ENCODE measurements at regions of chr7 and their contacts with region 1.

Region 1: DNA sequence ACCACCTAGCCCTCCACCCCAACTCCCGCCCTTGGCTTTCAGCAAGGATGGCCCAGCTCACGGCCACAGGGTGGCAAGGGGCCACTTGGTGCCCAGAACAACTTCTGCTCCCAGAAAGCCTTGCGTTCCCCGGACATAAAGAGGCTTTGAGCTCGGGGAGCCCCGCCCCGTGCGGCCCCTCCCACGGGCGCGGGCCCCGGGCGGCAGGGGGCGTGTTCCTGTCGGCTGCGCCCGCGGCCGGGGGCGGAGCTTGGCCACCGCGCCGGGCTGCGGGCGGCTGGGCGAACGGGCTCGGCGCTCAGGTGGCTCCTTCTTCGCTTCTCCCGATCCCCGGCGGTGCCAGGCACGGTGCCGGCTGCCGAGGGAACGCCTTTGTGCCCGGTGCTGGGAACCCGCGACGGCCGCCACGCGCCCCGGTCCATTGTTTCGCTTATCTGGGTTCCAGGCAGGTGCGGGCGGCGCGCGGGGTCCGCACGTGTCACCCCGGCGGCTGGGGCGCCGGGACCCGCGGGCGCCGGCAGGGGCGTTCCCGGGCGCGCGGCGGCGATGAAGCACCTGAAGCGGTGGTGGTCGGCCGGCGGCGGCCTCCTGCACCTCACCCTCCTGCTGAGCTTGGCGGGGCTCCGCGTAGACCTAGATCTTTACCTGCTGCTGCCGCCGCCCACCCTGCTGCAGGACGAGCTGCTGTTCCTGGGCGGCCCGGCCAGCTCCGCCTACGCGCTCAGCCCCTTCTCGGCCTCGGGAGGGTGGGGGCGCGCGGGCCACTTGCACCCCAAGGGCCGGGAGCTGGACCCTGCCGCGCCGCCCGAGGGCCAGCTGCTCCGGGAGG is at the start of gene NFE2L3:
- DNase-seq: peak; percentile 87
- ATAC-seq: peak; percentile 76
- H3K4me3 Mint-ChIP-seq: peak within 1 kb of the TSS; percentile 92
- H3K27ac Mint-ChIP-seq: peak within 1 kb of the TSS; percentile 98
- H3K4me1 Mint-ChIP-seq: peaks cover 64% of the 10 kb centered on the region
- H3K27me3 Mint-ChIP-seq: no peaks in the 10 kb centered on the region
- total RNA-seq, gene NFE2L3: 9.7 to 10.4 TPM

Region 2: DNA sequence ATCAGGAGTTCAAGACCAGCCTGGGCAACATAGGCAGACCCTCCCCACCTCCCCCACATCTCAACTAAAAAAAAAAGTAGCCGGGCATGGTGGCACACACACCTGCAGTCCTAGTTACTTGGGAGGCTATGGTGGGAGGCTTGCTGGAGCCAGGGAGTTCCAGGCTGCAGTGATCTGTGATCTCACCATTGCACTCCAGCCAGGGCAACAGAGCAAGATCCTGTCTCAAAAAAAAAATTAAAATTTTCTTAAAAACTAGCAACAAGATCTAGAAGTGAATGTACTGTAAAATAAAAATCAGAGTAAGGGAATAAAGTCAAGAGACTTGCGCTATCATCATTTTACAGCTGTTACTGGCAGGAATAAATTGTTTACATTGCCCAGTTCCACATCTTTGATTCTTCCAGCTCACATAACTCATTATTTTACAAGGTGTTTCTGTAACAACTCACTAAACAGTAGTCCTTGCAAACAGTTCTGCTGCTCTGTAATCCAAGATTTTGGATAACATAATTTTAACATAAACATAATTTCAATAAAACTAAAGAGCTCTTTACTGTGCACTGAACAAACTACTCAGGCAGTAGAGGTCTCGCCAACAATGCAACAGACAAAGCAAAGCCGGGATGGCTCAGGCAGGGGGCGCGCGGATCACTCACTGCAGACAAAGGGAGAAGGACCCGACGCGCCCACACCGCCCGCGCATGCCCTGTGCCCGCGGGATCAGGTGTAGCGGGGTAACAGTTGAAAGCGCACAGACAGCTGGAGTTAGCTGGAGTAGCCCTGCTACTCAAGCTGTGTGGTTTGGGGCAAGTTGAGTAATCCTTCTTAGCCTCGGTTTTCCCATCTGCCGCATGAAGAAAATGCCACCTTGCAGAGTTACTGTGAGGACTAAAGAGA is 73.5 kb before region 1 on chr7:
- CTCF ChIA-PET with region 1: interaction called, 12 read pairs
- POLR2A ChIA-PET with region 1: interaction called, 5 read pairs
- DNase-seq: peak; percentile 85
- ATAC-seq: peak; percentile 100
- H3K4me3 Mint-ChIP-seq: peak overlapping the region; percentile 19
- H3K27ac Mint-ChIP-seq: no peak overlapping the region
- H3K4me1 Mint-ChIP-seq: peaks cover 11% of the 10 kb centered on the region
- H3K27me3 Mint-ChIP-seq: peaks cover 44% of the 10 kb centered on the region

Region 3: GRCh38 chr7:26167301-26167934 is 15.3 kb after region 1 on chr7:
- CTCF ChIA-PET with region 1: interaction called, 12 read pairs
- POLR2A ChIA-PET with region 1: interaction called, 12 read pairs
- DNase-seq: peak; percentile 43
- ATAC-seq: peak; percentile 82
- H3K4me3 Mint-ChIP-seq: no peak overlapping the region
- H3K27ac Mint-ChIP-seq: peak overlapping the region; percentile 71
- H3K4me1 Mint-ChIP-seq: peaks cover 42% of the 10 kb centered on the region
- H3K27me3 Mint-ChIP-seq: no peaks in the 10 kb centered on the region

Region 4: DNA sequence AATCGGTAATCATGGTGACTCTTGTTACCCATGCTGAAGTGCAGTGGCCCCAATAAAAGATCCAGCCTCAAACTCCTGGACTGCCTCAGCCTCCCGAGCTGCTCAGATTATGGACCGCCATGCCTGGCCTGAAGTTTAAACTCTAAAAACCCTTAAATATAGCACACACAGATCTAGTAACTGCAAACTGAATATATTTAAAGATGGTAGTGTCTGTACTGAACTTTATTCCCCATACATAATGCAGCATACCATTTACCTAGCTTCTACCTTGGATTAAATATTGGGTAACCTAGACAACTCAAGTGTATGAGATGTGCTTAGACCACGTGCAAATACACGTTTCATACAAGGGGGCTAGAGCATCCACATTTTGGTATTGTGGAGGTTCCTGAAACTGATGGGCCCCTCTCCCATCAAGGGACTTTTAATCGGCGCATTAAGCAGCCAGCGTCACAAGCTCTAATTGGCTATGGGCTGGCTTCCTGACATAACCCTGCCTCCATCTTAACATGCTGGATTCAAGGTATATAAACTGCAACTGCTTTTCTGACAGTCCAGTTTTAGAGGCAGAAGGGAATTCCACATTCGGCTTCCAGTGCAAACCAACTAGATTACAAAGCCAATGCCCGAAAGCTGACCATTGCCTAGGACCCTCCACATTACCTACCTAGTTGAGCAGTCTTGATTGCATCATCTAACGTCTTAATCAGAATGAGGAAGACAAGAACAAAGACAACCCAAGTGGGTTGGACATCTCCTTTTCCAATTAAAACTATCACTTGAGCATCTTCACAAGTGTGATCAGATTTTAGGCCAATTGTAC is 35.4 kb after region 1 on chr7:
- CTCF ChIA-PET with region 1: interaction called, 5 read pairs
- POLR2A ChIA-PET with region 1: interaction called, 148 read pairs
- DNase-seq: no peak
- ATAC-seq: peak; percentile 13
- H3K4me3 Mint-ChIP-seq: peak overlapping the region; percentile 6
- H3K27ac Mint-ChIP-seq: peak overlapping the region; percentile 67
- H3K4me1 Mint-ChIP-seq: peaks cover 71% of the 10 kb centered on the region
- H3K27me3 Mint-ChIP-seq: no peaks in the 10 kb centered on the region

Region 5: GRCh38 chr7:26193432-26194207 is 41.5 kb after region 1 on chr7:
- CTCF ChIA-PET with region 1: interaction called, 28 read pairs
- POLR2A ChIA-PET with region 1: interaction called, 148 read pairs
- DNase-seq: no peak
- ATAC-seq: peak; percentile 6
- H3K4me3 Mint-ChIP-seq: peak overlapping the region; percentile 100
- H3K27ac Mint-ChIP-seq: peak overlapping the region; percentile 86
- H3K4me1 Mint-ChIP-seq: peaks cover 78% of the 10 kb centered on the region
- H3K27me3 Mint-ChIP-seq: no peaks in the 10 kb centered on the region